Colonic mucosa (tissue), 4 donors: ENCODE measurements at regions of chr10 and their contacts with region 1.

Region 1: GRCh38 chr10:6202684-6203330 is at the start of gene PFKFB3:
- DNase-seq: peak; percentile 94
- H3K4me3 ChIP-seq: peak within 1 kb of the TSS; percentile 75
- H3K27ac ChIP-seq: peak within 1 kb of the TSS; percentile 92
- H3K4me1 ChIP-seq: peaks cover 11% of the 10 kb centered on the region
- H3K27me3 ChIP-seq: no peaks in the 10 kb centered on the region
- CTCF ChIP-seq: peak; percentile 98
- total RNA-seq, gene PFKFB3: 23.4 to 70.7 TPM

Region 2: DNA sequence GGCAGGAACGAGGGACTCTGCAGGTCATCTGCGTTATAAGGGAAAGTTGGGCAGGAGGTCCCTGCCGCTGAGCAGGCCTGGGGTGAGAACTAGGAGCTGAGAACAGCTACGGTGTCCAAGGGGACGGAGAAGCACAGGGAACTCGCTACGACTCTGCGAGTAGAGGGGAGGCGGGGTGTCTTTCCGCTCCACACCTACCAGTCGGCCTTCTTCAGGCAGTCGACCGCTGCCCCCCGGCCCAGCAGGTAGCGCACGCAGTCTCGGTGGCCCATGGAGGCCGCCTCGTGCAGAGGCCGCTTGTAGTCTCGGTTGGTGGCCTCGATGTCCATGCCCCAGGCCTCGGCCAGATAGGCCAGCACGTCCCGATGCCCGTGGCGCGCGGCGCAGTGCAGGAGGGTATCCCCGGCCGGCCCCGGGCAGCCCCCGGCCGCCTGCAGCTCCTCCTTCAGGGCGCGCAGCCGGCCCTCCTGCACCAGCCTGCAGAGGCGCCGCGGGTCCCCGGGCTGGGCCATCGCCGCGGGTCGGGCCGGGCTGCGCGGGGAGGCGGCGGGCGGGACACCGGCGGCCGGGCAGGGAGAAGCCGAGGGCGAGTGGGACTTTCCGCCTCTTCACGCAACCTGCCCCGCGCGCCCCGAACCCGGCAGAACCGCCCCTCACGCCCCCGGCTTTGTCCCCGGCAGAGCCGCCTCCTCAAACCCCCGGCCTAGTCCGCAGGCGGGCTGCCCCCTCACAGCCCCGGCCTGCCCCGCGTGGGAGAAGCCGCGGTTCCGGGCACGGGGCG is 313.8 kb before region 1 on chr10:
- intact Hi-C with region 1: no loop called
- DNase-seq: peak; percentile 37
- H3K4me3 ChIP-seq: peak overlapping the region; percentile 97
- H3K27ac ChIP-seq: peak overlapping the region; percentile 66
- H3K4me1 ChIP-seq: peaks cover 3% of the 10 kb centered on the region
- H3K27me3 ChIP-seq: no peaks in the 10 kb centered on the region
- CTCF ChIP-seq: no peak

Region 3: DNA sequence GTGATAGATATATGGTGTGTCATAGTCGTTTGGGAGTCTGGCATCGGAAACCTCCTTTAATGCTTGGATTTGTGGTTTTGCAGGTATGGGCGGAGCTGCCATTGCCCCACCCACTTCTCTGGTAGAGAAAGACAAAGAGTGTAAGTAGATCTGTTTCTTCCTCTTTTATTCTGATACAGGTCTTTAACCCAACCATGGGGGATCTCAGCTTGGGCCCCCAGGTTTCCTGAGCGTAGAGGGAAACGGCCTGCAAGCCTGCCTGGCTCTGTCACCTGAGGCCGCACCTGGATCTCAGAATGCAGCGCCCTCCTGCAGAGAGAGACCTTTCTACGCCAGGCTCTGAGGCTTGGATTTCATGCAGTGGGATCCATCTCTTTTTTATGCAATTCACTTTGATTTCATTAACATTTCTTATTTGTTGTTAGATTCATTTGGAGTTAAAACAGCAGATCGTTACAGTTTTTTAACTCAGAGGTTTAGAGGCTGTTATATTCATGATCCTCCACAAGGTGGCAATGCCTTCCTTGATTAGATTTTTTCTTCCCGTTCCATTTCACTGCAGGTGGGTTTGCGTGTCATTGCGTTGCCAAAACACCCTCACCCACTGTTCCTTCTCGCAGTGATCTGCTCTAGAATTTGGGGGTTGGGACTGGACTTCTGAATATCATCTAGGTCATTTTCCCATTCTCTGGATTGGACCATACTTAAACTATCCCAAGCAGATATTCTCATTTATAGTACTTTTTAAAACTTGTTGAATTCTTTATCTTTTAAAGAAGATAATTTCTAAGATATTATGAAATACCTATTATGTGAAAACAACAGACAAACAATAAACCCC is 94.0 kb before region 1 on chr10:
- intact Hi-C with region 1: loop called (anchors 2 kb)
- DNase-seq: peak; percentile 35
- H3K4me3 ChIP-seq: no peak overlapping the region
- H3K27ac ChIP-seq: no peak overlapping the region
- H3K4me1 ChIP-seq: peaks cover 3% of the 10 kb centered on the region
- H3K27me3 ChIP-seq: no peaks in the 10 kb centered on the region
- CTCF ChIP-seq: peak; percentile 67

Region 4: DNA sequence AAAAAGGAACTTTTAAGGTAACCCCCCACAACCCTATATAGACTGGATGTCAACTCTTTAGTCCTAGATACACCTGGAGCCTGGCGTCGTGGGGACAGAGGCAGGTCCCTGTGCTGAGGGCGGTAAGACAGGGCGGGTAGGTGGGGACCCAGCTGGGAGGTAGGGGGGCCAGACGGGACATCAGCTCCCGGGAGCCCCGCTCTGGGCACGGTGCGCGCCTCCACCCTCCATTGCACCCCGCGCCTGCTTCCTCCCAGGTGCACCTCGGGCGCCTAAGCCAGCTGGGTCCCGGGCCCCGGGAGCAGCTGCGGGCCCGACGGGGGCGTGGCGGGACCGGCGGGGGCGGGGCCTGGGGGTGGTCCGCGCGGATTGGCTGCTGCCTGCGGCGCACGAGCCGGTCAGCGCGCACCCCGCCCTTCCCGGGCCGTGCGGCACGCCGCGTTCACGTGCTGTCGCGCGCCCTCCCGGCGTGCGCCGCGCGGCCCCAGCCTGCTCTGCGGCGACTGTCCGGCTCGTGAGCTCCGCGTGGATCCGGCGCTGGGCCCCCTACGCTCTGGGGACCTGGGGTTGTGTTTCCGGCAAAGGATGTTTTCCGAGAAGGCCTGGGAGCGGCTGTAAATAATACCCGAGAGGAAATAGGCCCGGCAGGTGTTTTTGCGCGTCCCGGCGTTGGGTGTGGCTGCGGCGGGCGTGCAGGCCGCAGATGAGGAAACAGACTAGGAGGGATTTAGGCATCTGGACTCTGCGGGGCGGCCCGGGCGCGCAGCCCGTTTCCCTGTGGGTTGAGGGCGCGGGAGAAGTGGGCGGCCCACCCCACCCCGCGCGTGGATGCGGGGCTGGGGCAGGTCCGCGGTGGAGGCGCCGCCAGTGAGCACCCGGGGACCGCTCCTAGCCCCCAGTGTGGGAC is 39.2 kb before region 1 on chr10:
- intact Hi-C with region 1: loop called (anchors 5 kb)
- DNase-seq: peak; percentile 88
- H3K4me3 ChIP-seq: peak overlapping the region; percentile 69
- H3K27ac ChIP-seq: peak overlapping the region; percentile 86
- H3K4me1 ChIP-seq: no peaks in the 10 kb centered on the region
- H3K27me3 ChIP-seq: no peaks in the 10 kb centered on the region
- CTCF ChIP-seq: no peak

Region 5: GRCh38 chr10:6279540-6280267 is 76.9 kb after region 1 on chr10:
- intact Hi-C with region 1: no loop called
- DNase-seq: no peak
- H3K4me3 ChIP-seq: no peak overlapping the region
- H3K27ac ChIP-seq: no peak overlapping the region
- H3K4me1 ChIP-seq: no peaks in the 10 kb centered on the region
- H3K27me3 ChIP-seq: no peaks in the 10 kb centered on the region
- CTCF ChIP-seq: no peak

Region 6: GRCh38 chr10:6401562-6402348 is 198.9 kb after region 1 on chr10:
- intact Hi-C with region 1: loop called (anchors 2 kb)
- DNase-seq: peak; percentile 77
- H3K4me3 ChIP-seq: peak overlapping the region; percentile 20
- H3K27ac ChIP-seq: no peak overlapping the region
- H3K4me1 ChIP-seq: no peaks in the 10 kb centered on the region
- H3K27me3 ChIP-seq: no peaks in the 10 kb centered on the region
- CTCF ChIP-seq: peak; percentile 54

Region 7: GRCh38 chr10:6563075-6563474 is 360.3 kb after region 1 on chr10:
- intact Hi-C with region 1: no loop called
- DNase-seq: no peak
- H3K4me3 ChIP-seq: no peak overlapping the region
- H3K27ac ChIP-seq: no peak overlapping the region
- H3K4me1 ChIP-seq: no peaks in the 10 kb centered on the region
- H3K27me3 ChIP-seq: no peaks in the 10 kb centered on the region
- CTCF ChIP-seq: no peak